ENCODE measurements at regions of chr19 and their contacts with region 1.

Region 1: DNA sequence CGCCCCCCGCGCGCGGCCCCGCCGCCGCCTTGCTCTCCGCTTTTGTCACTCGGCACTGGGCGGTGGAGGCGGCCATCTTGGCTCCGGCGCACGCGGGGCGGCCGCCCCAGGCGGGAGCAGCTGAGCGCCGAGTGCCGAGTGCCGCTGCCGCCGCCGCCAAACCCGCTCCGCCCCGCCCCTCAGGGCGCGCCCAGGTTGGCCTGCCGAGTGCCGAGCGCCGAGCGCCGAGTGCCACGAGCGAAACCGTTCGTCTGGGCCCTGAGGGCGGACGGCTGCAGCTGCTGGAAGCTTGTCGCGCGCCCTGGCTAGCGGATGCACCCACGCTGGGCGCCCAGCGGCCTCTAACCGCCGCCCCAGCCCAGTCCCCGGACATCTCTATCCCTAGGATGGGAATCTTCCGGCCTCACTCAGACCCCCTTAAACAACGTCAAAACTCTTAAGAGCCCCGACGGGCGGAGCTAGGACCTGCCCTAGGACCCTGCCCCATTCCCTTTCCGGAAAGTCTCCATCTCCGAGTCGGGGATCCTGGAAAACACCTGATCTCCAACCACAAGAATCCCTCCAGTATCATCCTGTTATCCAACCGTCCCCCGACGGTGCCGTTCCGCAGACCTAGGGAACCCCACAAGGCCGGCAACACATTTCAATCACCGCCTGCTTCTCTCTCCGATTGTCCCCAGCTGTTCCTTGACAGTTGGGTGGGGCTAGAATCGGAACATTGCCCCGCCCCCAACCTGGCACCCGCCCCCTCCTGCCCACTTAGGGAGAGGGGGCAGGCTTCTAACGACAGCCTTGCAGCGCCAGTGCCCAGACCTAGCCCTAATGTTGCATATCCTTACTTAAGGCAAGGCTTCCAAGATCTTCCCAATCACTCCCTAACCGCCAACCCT is 14.1 kb upstream of the AKAP8L start:
- DNase-seq: peak; percentile 90 to 94
- H3K4me3 ChIP-seq: peak overlapping the region; percentile 94
- H3K4me3 Mint-ChIP-seq: peak overlapping the region; percentile 98
- H3K27ac Mint-ChIP-seq: peak overlapping the region; percentile 88
- H3K4me1 ChIP-seq: peaks cover 14% of the 10 kb centered on the region
- H3K4me1 Mint-ChIP-seq: peaks cover 22% of the 10 kb centered on the region
- H3K27me3 ChIP-seq: no peaks in the 10 kb centered on the region
- H3K27me3 Mint-ChIP-seq: no peaks in the 10 kb centered on the region
- CTCF ChIP-seq: no peak

Region 2: DNA sequence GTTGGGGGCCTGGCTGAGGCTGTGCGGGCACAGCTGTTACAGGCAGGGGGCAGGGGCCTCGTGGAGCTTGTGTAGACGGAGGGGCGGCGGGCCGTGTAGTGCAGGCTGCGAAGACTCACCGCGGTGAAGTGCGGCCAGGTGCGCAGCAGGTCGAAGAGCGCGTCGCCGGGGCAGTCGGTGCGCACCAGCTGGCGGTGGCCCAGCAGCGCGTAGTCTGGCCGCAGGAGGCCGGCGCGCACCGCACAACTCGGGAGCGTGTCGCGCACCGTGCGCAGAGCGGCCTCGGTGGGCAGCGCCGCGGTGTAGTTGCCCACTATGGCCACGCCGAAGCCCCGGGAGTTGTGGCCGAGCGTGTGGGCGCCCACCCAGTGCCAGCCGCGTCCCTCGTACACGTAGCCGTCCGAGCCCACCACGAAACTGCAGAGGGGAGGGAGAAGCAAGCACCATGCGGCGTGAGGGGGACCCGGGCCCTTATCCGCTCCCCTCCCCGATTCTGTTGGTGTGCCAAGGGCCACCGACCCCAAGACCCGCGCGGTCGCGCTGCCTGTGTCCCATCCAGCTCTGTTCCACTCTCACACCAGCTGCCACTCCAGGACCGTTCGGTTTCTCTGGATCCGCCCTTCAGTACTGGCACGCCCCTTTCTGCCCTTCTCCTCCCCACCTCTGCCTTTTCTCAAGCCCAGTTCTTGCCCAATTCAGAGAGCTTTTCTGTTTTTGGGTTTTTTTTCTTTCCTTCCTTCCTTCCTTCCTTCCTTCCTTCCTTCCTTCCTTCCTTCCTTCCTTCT is 36.8 kb after region 1 on chr19:
- CTCF ChIA-PET with region 1: no interaction called
- POLR2A ChIA-PET with region 1: no interaction called
- intact Hi-C with region 1: loop called (anchors 1 kb)
- DNase-seq: no peak
- H3K4me3 ChIP-seq: no peak overlapping the region
- H3K4me3 Mint-ChIP-seq: no peak overlapping the region
- H3K27ac Mint-ChIP-seq: peak overlapping the region; percentile 24
- H3K4me1 ChIP-seq: peaks cover 4% of the 10 kb centered on the region; the same call in 1 of the 2 replicates
- H3K4me1 Mint-ChIP-seq: peaks cover 11% of the 10 kb centered on the region
- H3K27me3 ChIP-seq: no peaks in the 10 kb centered on the region
- H3K27me3 Mint-ChIP-seq: no peaks in the 10 kb centered on the region
- CTCF ChIP-seq: no peak

Measured in Caco-2 (cell line).